ENCODE measurements at regions of chr6 and their contacts with region 1.

Region 1: DNA sequence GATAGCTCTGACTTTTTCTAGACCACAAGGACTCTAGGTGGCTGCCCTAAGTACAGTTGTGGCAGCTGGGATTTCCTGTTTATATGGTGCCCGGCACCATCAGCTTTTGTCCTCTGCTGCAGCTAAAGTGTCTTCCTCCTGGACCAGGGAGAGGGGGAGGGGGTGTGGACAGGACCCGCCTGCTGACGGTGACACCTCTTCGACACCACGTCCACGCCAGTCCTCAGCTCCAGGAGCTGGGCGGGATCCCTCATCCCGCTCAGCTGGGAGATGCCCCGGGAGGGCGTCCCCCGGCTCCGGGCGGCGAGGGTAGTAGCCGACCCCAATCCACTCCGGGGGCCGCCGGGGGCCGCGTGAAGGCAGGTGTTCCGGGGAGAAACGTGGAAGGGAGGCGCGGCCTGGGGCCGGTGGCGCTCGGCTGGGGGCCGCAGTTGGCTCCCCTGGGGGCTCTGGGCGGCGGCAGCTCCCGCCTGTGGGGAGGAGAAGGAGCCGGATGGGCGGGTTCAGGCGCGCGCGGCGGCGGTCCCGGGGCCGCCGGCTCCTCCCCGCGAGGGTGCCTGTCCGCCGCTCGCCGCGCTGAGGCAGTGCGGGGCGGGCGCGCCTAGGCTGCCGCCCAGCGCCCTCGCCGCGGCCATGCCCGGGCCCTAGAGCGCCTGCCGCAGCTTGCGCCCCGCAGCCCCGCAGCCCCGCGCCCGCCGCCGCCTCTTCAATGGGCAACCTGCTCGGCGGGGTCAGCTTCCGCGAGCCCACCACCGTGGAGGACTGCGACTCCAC is at the start of gene OGFRL1:
- DNase-seq: peak; percentile 36 to 88 (median 68)
- ATAC-seq: peak; percentile 85
- H3K4me3 ChIP-seq: peak within 1 kb of the TSS; percentile 70 to 74
- H3K4me3 Mint-ChIP-seq: peak within 1 kb of the TSS; percentile 79
- H3K27ac ChIP-seq: peak within 1 kb of the TSS; percentile 53 to 82
- H3K27ac Mint-ChIP-seq: peak within 1 kb of the TSS; percentile 84
- H3K4me1 ChIP-seq: peaks cover 24% of the 10 kb centered on the region
- H3K4me1 Mint-ChIP-seq: peaks cover 41% of the 10 kb centered on the region
- H3K27me3 ChIP-seq: no peaks in the 10 kb centered on the region
- H3K27me3 Mint-ChIP-seq: no peaks in the 10 kb centered on the region
- CTCF ChIP-seq: no peak
- total RNA-seq, gene OGFRL1: 9.6 to 10.0 TPM

Region 2: GRCh38 chr6:69796642-69797390 is 1491.6 kb before region 1 on chr6 and contains the start of gene LMBRD1:
- CTCF ChIA-PET with region 1: no interaction called
- POLR2A ChIA-PET with region 1: no interaction called
- intact Hi-C with region 1: loop called in 1 of 2 experiments (anchors 10 kb)
- DNase-seq: peak; percentile 98 to 100 (median 99)
- ATAC-seq: peak; percentile 77
- H3K4me3 ChIP-seq: peak within 1 kb of the TSS; percentile 61 to 90
- H3K4me3 Mint-ChIP-seq: peak within 1 kb of the TSS; percentile 98
- H3K27ac ChIP-seq: peak within 1 kb of the TSS; percentile 92 to 93
- H3K27ac Mint-ChIP-seq: peak within 1 kb of the TSS; percentile 99
- H3K4me1 ChIP-seq: peaks cover 17% of the 10 kb centered on the region
- H3K4me1 Mint-ChIP-seq: peaks cover 56% of the 10 kb centered on the region
- H3K27me3 ChIP-seq: no peaks in the 10 kb centered on the region
- H3K27me3 Mint-ChIP-seq: no peaks in the 10 kb centered on the region
- CTCF ChIP-seq: peak; percentile 94
- total RNA-seq, gene LMBRD1: 39.2 to 40.3 TPM

Region 3: GRCh38 chr6:70566751-70567382 is 721.5 kb before region 1 on chr6 and contains the start of gene SDHAF4:
- CTCF ChIA-PET with region 1: no interaction called
- POLR2A ChIA-PET with region 1: no interaction called
- intact Hi-C with region 1: loop called (anchors 5 kb)
- DNase-seq: peak; percentile 90 to 96 (median 95)
- ATAC-seq: peak; percentile 99
- H3K4me3 ChIP-seq: peak within 1 kb of the TSS; percentile 89 to 93
- H3K4me3 Mint-ChIP-seq: peak within 1 kb of the TSS; percentile 87
- H3K27ac ChIP-seq: peak within 1 kb of the TSS; percentile 61 to 82
- H3K27ac Mint-ChIP-seq: peak within 1 kb of the TSS; percentile 92
- H3K4me1 ChIP-seq: peaks cover 13% of the 10 kb centered on the region
- H3K4me1 Mint-ChIP-seq: peaks cover 24% of the 10 kb centered on the region
- H3K27me3 ChIP-seq: no peaks in the 10 kb centered on the region
- H3K27me3 Mint-ChIP-seq: no peaks in the 10 kb centered on the region
- CTCF ChIP-seq: no peak
- total RNA-seq, gene SDHAF4: 1.4 to 1.7 TPM

Region 4: DNA sequence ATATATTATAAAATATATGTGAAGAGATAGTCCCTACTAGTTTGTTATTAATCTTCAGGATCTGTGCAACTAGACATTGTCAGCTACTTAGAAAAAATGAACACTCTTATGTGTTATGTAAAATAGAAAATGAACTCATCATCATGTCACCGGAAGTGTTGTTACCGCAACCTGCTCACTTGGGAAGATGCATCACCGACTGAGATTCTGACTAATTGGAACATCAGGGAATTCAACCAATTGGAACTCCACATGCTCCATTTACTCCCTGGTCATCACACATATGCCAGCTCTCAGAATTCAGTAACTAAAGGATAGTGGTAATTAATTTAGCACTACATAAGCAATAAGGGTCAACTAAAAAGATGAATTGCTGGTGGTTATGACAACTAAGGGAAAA is 314.8 kb before region 1 on chr6:
- CTCF ChIA-PET with region 1: no interaction called
- POLR2A ChIA-PET with region 1: no interaction called
- intact Hi-C with region 1: no loop called
- DNase-seq: no peak
- ATAC-seq: no peak
- H3K4me3 ChIP-seq: no peak overlapping the region
- H3K4me3 Mint-ChIP-seq: no peak overlapping the region
- H3K27ac ChIP-seq: no peak overlapping the region
- H3K27ac Mint-ChIP-seq: no peak overlapping the region
- H3K4me1 ChIP-seq: no peaks in the 10 kb centered on the region
- H3K4me1 Mint-ChIP-seq: no peaks in the 10 kb centered on the region
- H3K27me3 ChIP-seq: no peaks in the 10 kb centered on the region
- H3K27me3 Mint-ChIP-seq: peaks cover 24% of the 10 kb centered on the region
- CTCF ChIP-seq: no peak

Region 5: GRCh38 chr6:71190809-71191208 is 97.6 kb before region 1 on chr6:
- CTCF ChIA-PET with region 1: interaction called, 9 read pairs
- POLR2A ChIA-PET with region 1: interaction called, 3 read pairs
- intact Hi-C with region 1: loop called in 1 of 2 experiments (anchors 5 kb)
- DNase-seq: peak in 2 of 9 experiments; percentile 42 to 47
- ATAC-seq: no peak
- H3K4me3 ChIP-seq: no peak overlapping the region
- H3K4me3 Mint-ChIP-seq: no peak overlapping the region
- H3K27ac ChIP-seq: no peak overlapping the region
- H3K27ac Mint-ChIP-seq: no peak overlapping the region
- H3K4me1 ChIP-seq: no peaks in the 10 kb centered on the region
- H3K4me1 Mint-ChIP-seq: no peaks in the 10 kb centered on the region
- H3K27me3 ChIP-seq: no peaks in the 10 kb centered on the region
- H3K27me3 Mint-ChIP-seq: peaks cover 5% of the 10 kb centered on the region
- CTCF ChIP-seq: peak; percentile 52

Region 6: GRCh38 chr6:71250099-71250606 is 38.3 kb before region 1 on chr6:
- CTCF ChIA-PET with region 1: no interaction called
- POLR2A ChIA-PET with region 1: interaction called, 4 read pairs
- intact Hi-C with region 1: loop called in 1 of 2 experiments (anchors 5 kb)
- DNase-seq: no peak
- ATAC-seq: no peak
- H3K4me3 ChIP-seq: no peak overlapping the region
- H3K4me3 Mint-ChIP-seq: no peak overlapping the region
- H3K27ac ChIP-seq: no peak overlapping the region
- H3K27ac Mint-ChIP-seq: peak overlapping the region; percentile 46
- H3K4me1 ChIP-seq: peaks cover 8% of the 10 kb centered on the region
- H3K4me1 Mint-ChIP-seq: peaks cover 12% of the 10 kb centered on the region
- H3K27me3 ChIP-seq: no peaks in the 10 kb centered on the region
- H3K27me3 Mint-ChIP-seq: no peaks in the 10 kb centered on the region
- CTCF ChIP-seq: no peak

Measured in CD8-positive, alpha-beta T cell (primary cell).